ENCODE measurements at regions of chr2 and their contacts with region 1.

Region 1: GRCh38 chr2:161946489-161947107 is 127.4 kb downstream of the DPP4 start:
- DNase-seq: peak; percentile 51
- ATAC-seq: peak; percentile 61
- H3K4me3 Mint-ChIP-seq: no peak overlapping the region
- H3K27ac Mint-ChIP-seq: no peak overlapping the region
- H3K4me1 Mint-ChIP-seq: peaks cover 36% of the 10 kb centered on the region
- H3K27me3 Mint-ChIP-seq: peaks cover 4% of the 10 kb centered on the region

Region 2: GRCh38 chr2:161592713-161593112 is 353.9 kb before region 1 on chr2:
- CTCF ChIA-PET with region 1: interaction called, 85 read pairs
- POLR2A ChIA-PET with region 1: no interaction called
- DNase-seq: no peak
- ATAC-seq: no peak
- H3K4me3 Mint-ChIP-seq: no peak overlapping the region
- H3K27ac Mint-ChIP-seq: no peak overlapping the region
- H3K4me1 Mint-ChIP-seq: peaks cover 20% of the 10 kb centered on the region
- H3K27me3 Mint-ChIP-seq: peaks cover 33% of the 10 kb centered on the region

Region 3: DNA sequence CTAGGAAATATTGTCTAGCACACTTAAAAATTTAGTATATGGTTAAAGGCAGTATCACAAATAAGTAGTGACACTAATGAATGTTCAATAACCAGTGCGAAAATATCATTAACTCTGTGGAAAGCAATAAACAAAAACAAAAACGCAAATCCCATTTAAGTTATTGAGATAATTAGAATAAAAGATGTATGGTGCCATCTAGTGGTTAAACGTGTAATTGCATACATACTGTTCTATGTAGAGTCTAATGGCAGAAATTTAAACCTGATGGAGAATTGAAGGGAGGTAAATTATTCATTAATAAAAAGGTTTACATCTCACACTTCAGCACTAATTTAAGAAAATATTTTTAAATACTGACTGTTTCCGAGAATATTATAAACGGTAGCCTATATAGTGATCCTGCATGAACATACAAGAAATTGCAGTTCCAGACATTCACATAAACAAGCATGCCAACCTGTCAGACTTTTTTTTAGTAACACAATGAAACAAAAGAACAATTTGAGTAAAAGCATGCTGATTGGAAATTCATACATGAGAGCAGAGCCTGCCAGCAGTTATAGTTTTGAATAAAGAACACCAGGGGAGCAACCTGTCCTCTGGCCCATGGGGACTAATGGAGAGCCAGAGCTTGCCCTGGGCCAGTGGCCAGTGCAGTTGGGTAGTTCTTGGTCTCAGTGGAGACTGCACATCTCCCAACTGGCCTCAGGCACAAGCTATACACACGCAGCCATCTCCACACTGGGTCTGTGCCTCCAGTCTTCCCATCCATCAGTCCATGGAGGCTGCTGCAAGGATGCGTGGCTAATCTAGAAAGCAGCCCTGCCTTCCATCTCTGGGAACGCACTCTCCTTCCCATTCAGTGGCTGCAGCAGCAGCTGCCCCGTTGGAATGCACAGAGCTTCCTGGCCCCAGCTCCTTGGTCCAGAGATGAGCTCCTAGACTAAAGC is 177.5 kb after region 1 on chr2:
- CTCF ChIA-PET with region 1: interaction called, 48 read pairs
- POLR2A ChIA-PET with region 1: no interaction called
- DNase-seq: no peak
- ATAC-seq: peak; percentile 68
- H3K4me3 Mint-ChIP-seq: no peak overlapping the region
- H3K27ac Mint-ChIP-seq: no peak overlapping the region
- H3K4me1 Mint-ChIP-seq: peaks cover 26% of the 10 kb centered on the region
- H3K27me3 Mint-ChIP-seq: peaks cover 4% of the 10 kb centered on the region

Measured in activated CD8-positive, alpha-beta T cell treated with anti-CD3 and anti-CD28 coated beads, Interleukin-2, amount 10 ng/mL, durations not matched to agents 7 days and 5 days (primary cell).